WTC11 (cell line): ENCODE measurements at regions of chr5 and their contacts with region 1.

Region 1: GRCh38 chr5:14644623-14645237 is 19.8 kb upstream of the OTULIN start:
- DNase-seq: no peak
- ATAC-seq: peak; percentile 74
- H3K4me3 Mint-ChIP-seq: no peak overlapping the region
- H3K27ac Mint-ChIP-seq: peak overlapping the region; percentile 71; the same call in 1 of the 2 replicates
- H3K4me1 Mint-ChIP-seq: peaks cover 10% of the 10 kb centered on the region
- H3K27me3 Mint-ChIP-seq: no peaks in the 10 kb centered on the region
- CTCF ChIP-seq: no peak

Region 2: GRCh38 chr5:14326035-14326903 is 318.5 kb before region 1 on chr5:
- CTCF ChIA-PET with region 1: interaction called, 17 read pairs
- POLR2A ChIA-PET with region 1: no interaction called
- DNase-seq: no peak
- ATAC-seq: peak; percentile 88
- H3K4me3 Mint-ChIP-seq: no peak overlapping the region
- H3K27ac Mint-ChIP-seq: peak overlapping the region; percentile 43; the same call in 1 of the 2 replicates
- H3K4me1 Mint-ChIP-seq: peaks cover 20% of the 10 kb centered on the region
- H3K27me3 Mint-ChIP-seq: no peaks in the 10 kb centered on the region
- CTCF ChIP-seq: no peak; the same call in 1 of the 2 replicates

Region 3: GRCh38 chr5:14357851-14358250 is 286.9 kb before region 1 on chr5:
- CTCF ChIA-PET with region 1: interaction called, 14 read pairs
- POLR2A ChIA-PET with region 1: no interaction called
- DNase-seq: peak; percentile 70
- ATAC-seq: peak; percentile 86
- H3K4me3 Mint-ChIP-seq: peak overlapping the region; percentile 54
- H3K27ac Mint-ChIP-seq: peak overlapping the region; percentile 23; the same call in 1 of the 2 replicates
- H3K4me1 Mint-ChIP-seq: peaks cover 33% of the 10 kb centered on the region
- H3K27me3 Mint-ChIP-seq: no peaks in the 10 kb centered on the region
- CTCF ChIP-seq: no peak

Region 4: DNA sequence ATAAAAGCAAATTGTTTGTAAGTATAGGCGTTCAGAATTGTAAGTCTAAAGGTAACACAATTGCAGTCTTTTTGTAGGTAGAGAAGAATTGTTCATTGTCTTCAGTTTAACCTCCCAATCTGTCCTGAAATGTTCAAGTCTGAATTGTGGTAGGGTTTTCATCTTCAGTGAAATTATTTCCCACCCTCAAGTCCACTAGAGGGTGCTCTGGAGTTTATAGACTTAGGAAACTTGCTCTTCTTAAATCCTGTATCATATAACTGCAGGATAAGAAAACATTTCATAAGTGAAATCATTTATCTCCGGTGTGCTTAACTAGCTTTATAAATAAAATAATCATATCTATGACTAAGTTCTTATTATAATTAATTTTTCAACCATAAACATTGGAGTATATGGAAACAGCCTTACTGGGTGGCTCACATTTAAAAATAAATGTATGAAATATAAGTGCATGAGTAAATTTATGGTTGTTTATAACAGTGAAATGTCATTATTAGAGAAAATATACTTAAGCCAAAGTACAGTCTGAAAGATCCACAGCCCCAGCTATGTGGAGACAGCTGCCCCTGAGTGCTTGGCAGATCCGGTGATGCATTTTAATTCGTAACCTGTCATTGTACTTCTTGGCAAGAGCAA is 245.6 kb before region 1 on chr5:
- CTCF ChIA-PET with region 1: interaction called, 11 read pairs
- POLR2A ChIA-PET with region 1: no interaction called
- DNase-seq: no peak
- ATAC-seq: 0 out of 2 replicates have a peak, but pooled peaks have one; percentile 48
- H3K4me3 Mint-ChIP-seq: no peak overlapping the region
- H3K27ac Mint-ChIP-seq: no peak overlapping the region
- H3K4me1 Mint-ChIP-seq: peaks cover 13% of the 10 kb centered on the region
- H3K27me3 Mint-ChIP-seq: no peaks in the 10 kb centered on the region
- CTCF ChIP-seq: 0 out of 2 replicates have a peak, but pooled peaks have one; percentile 25

Region 5: DNA sequence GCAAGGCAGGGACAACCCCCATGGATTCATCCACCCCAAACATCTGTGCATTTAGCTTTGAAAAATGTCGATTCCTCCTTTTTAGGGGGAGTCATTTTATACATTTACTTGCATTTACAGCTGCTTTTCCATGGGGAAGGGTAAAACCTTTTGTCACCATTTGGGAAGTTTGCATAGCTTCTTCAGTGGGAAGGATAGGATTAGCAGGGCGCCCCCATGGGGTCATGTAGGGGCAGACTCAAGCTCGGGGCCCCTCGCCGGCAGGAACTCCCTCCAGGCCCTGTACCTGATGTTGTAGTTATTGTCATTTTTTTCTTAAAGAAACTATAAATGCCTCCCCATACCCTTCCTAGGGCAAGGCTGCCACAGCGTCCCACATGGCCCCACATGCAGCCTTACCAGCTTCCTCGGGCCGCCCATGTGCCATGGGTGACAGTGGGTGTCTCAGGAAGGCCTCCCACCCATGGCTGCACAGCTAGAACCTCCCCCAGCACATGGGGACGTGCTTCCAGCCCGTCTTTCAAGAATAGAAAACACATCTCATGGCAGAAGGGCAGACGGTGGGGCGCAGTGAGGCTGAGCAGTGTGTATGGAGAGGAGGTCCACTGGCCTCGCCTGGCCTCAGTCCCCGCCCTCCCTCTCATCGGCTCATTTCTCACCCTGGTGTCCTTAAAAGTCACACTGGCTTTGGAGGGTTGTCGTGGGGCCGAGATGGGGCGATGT is 139.3 kb before region 1 on chr5:
- CTCF ChIA-PET with region 1: interaction called, 25 read pairs
- POLR2A ChIA-PET with region 1: no interaction called
- DNase-seq: peak; percentile 44
- ATAC-seq: peak; percentile 70
- H3K4me3 Mint-ChIP-seq: no peak overlapping the region
- H3K27ac Mint-ChIP-seq: no peak overlapping the region
- H3K4me1 Mint-ChIP-seq: no peaks in the 10 kb centered on the region
- H3K27me3 Mint-ChIP-seq: no peaks in the 10 kb centered on the region
- CTCF ChIP-seq: peak; percentile 46

Region 6: DNA sequence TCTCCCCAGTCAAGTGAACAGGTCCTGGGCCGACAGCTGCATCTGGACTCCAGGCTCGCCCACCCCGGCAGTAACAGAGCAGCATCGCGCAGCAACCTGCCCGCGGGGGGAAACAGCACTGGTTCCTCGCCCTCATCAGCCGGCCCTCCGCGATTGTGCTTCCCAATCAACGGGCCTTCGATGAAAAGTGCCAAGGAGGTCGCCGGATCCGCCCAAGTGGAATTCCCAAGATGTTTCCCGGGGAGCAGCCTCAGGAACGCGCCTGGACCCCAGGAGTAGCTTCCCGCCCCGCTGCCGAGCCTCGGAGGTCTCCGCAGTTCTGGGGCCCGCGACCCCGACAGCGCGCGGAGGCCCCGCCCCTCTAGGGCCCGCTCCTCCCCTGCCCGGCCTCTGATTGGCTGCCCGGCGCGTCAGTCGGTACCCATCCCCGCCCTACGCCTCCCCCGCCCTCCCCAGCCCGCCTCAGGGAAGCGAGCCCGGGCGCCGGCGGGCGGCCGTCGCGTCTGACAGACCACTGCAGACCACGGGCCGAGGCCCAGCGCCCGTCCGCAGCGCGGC is 63.3 kb before region 1 on chr5 and contains the start of gene OTULINL:
- CTCF ChIA-PET with region 1: interaction called, 15 read pairs
- POLR2A ChIA-PET with region 1: interaction called, 3 read pairs
- DNase-seq: peak; percentile 92
- ATAC-seq: peak; percentile 94
- H3K4me3 Mint-ChIP-seq: peak within 1 kb of the TSS; percentile 76
- H3K27ac Mint-ChIP-seq: no peak within 1 kb of the TSS
- H3K4me1 Mint-ChIP-seq: peaks cover 11% of the 10 kb centered on the region
- H3K27me3 Mint-ChIP-seq: peaks cover 57% of the 10 kb centered on the region
- CTCF ChIP-seq: no peak
- total RNA-seq, gene OTULINL: 6.6 to 12.3 TPM (median 10.6 TPM) in 3 replicates